ENCODE measurements at regions of chr4 and their contacts with region 1.

Region 1: DNA sequence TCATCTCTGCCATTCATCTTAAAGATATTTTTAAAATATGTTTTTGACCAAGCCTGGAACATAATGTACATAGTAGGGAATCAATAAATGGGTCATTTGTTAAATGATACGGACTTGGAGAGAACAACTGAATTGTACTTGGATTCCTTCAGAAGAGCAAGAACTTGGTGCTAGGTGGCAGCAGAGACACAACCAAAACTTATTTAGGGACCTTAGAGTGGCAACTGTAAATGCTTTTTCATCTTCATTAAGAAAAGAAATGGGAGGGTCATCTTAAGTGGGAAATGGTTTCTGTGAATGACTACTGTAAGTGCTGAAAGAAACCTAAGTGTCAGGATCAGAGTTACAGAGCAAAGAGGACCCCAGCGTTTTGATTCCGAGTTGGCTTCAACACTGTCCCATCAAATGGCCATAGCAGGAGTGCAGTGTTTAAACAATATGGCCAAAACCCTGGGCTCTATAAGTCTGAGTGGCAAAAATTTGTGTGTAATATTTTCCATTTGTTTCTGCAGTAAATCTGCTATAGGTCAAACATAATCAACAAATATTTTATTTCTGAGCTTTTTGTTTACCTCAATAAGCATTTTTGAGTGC is 213.6 kb downstream of the PALLD start:
- DNase-seq: no peak
- H3K4me3 ChIP-seq: no peak overlapping the region
- H3K27ac ChIP-seq: peak overlapping the region; percentile 75 to 82 (median 79)
- H3K4me1 ChIP-seq: peaks cover 19 to 43% (median 29%) of the 10 kb centered on the region in 4 donors
- H3K27me3 ChIP-seq: no peaks in the 10 kb centered on the region
- CTCF ChIP-seq: peak; percentile 68 to 74 (median 72)
- EP300 ChIP-seq: no peak
- POLR2A ChIP-seq: no peak

Region 2: GRCh38 chr4:168451744-168452390 is 258.6 kb before region 1 on chr4:
- intact Hi-C with region 1: no loop called
- DNase-seq: no peak
- H3K4me3 ChIP-seq: no peak overlapping the region
- H3K27ac ChIP-seq: no peak overlapping the region
- H3K4me1 ChIP-seq: no peaks in the 10 kb centered on the region
- H3K27me3 ChIP-seq: no peaks in the 10 kb centered on the region
- CTCF ChIP-seq: no peak
- EP300 ChIP-seq: no peak
- POLR2A ChIP-seq: no peak

Region 3: GRCh38 chr4:168631241-168632162 is 78.9 kb before region 1 on chr4:
- intact Hi-C with region 1: loop called (anchors 5 kb)
- DNase-seq: no peak
- H3K4me3 ChIP-seq: peak overlapping the region; percentile 58 to 74 (median 64)
- H3K27ac ChIP-seq: peak overlapping the region; percentile 73 to 77 (median 76)
- H3K4me1 ChIP-seq: peaks cover 35 to 48% (median 36%) of the 10 kb centered on the region in 4 donors
- H3K27me3 ChIP-seq: no peaks in the 10 kb centered on the region
- CTCF ChIP-seq: peak; percentile 34 to 66 (median 44)
- EP300 ChIP-seq: no peak
- POLR2A ChIP-seq: no peak

Region 4: GRCh38 chr4:168917138-168917779 is 206.8 kb after region 1 on chr4:
- intact Hi-C with region 1: loop called (anchors 5 kb)
- DNase-seq: no peak
- H3K4me3 ChIP-seq: no peak overlapping the region
- H3K27ac ChIP-seq: peak overlapping the region; percentile 34 to 59 (median 52)
- H3K4me1 ChIP-seq: peaks cover 11 to 70% (median 45%) of the 10 kb centered on the region in 4 donors
- H3K27me3 ChIP-seq: no peaks in the 10 kb centered on the region
- CTCF ChIP-seq: peak; percentile 48 to 60 (median 55)
- EP300 ChIP-seq: no peak
- POLR2A ChIP-seq: no peak